CD14-positive monocyte (primary cell): ENCODE measurements at regions of chr16 and their contacts with region 1.

Region 1: GRCh38 chr16:77807-78443 is at the start of gene MPG:
- DNase-seq: peak; percentile 60 to 73 (median 62)
- H3K4me3 ChIP-seq: peak within 1 kb of the TSS; percentile 73 to 87 (median 77)
- H3K4me3 Mint-ChIP-seq: peak within 1 kb of the TSS; percentile 93 to 98
- H3K27ac ChIP-seq: peak within 1 kb of the TSS in 1 of 2 donors; percentile 74
- H3K27ac Mint-ChIP-seq: peak within 1 kb of the TSS in 6 of 7 donors; percentile 54 to 86 (median 84)
- H3K4me1 ChIP-seq: peaks cover 28 to 36% of the 10 kb centered on the region in 2 donors
- H3K4me1 Mint-ChIP-seq: peaks cover 41% of the 10 kb centered on the region
- H3K27me3 ChIP-seq: peaks cover 5 to 25% of the 10 kb centered on the region in 2 donors
- H3K27me3 Mint-ChIP-seq: peaks cover 23 to 33% (median 27%) of the 10 kb centered on the region in 3 donors
- CTCF ChIP-seq: no peak
- polyA plus RNA-seq, gene MPG: 32.5 to 86.9 (median 70.6) TPM

Region 2: GRCh38 chr16:53346-54236 is 24.3 kb before region 1 on chr16 and contains the starts of genes POLR3K and SNRNP25:
- intact Hi-C with region 1: loop called in 1 of 2 experiments (anchors 2 kb)
- DNase-seq: peak; percentile 94 to 98 (median 96)
- H3K4me3 ChIP-seq: peak within 1 kb of the TSS; percentile 77 to 97 (median 87)
- H3K4me3 Mint-ChIP-seq: peak within 1 kb of the TSS; percentile 99
- H3K27ac ChIP-seq: peak within 1 kb of the TSS; percentile 42 to 78
- H3K27ac Mint-ChIP-seq: peak within 1 kb of the TSS; percentile 71 to 95 (median 87)
- H3K4me1 ChIP-seq: peaks cover 11 to 20% of the 10 kb centered on the region in 2 donors
- H3K4me1 Mint-ChIP-seq: peaks cover 33% of the 10 kb centered on the region
- H3K27me3 ChIP-seq: no peaks in the 10 kb centered on the region
- H3K27me3 Mint-ChIP-seq: peaks cover 0 to 2% (median 0%) of the 10 kb centered on the region in 3 donors
- CTCF ChIP-seq: no peak
- polyA plus RNA-seq, gene POLR3K: 9.9 to 20.8 (median 18.7) TPM
- polyA plus RNA-seq, gene SNRNP25: 18.5 to 32.2 (median 31.6) TPM